HepG2 (cell line): ENCODE measurements at regions of chr1 and their contacts with region 1.

Region 1: DNA sequence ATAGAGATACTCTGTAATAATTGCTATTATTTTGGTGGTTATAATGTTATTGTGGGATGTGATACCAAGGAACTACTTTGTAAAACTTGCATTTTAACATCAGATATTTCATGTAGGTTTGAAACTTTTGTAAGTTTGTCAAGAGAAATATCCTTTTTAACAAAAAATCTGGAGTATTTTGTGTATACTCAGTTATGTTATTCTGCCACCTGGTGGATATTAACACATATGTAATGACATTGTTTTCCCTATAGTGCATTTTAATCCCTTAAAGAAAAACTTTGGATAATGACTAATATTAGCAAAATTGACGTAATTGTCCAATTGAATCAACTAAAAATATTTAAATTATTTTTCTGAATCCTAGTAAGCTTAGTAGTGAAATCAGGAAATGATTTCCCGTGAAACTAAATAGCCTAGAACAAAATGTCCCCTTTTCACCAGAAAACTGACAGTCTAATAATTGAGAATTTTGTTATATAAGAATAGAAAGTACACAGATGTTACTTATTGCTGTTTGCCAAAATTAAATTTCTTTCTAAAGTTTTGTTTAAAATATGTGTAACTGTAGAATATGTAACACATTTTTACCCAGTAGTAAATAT is 39.6 kb downstream of the KCTD3 start:
- DNase-seq: no peak
- ATAC-seq: peak; percentile 48; the same call in 2 of the 3 replicates
- H3K4me3 ChIP-seq: no peak overlapping the region
- H3K27ac ChIP-seq: no peak overlapping the region
- H3K4me1 ChIP-seq: peaks cover 26% of the 10 kb centered on the region
- H3K27me3 ChIP-seq: no peaks in the 10 kb centered on the region
- CTCF ChIP-seq: peak; percentile 36
- EP300 ChIP-seq: no peak
- POLR2A ChIP-seq: no peak
- RAD21 ChIP-seq: no peak

Region 2: DNA sequence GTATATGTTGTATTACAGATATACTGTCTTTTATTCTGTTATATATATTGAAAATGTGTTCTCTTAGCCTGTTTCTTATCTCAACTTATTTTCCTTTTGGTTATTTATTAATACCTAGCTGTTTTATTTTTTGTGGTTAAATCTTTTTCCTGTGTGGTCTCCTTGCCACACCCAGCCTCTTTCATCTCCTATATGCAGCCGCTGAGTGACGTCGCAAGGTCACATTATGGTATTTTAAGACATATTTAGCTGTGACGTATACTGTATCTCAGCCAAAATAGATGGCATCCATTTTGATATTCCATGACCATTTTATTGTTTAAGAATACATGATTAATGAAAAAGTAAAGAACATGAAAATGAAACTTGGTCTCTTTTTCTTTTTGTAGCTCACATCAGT is 974.6 kb before region 1 on chr1:
- CTCF ChIA-PET with region 1: no interaction called
- POLR2A ChIA-PET with region 1: no interaction called
- in situ Hi-C with region 1: no loop called
- intact Hi-C with region 1: loop called (anchors 1 kb)
- DNase-seq: no peak
- ATAC-seq: no peak
- H3K4me3 ChIP-seq: no peak overlapping the region
- H3K27ac ChIP-seq: no peak overlapping the region
- H3K4me1 ChIP-seq: peaks cover 11% of the 10 kb centered on the region; the same call in 1 of the 2 replicates
- H3K27me3 ChIP-seq: no peaks in the 10 kb centered on the region
- CTCF ChIP-seq: no peak
- EP300 ChIP-seq: no peak
- POLR2A ChIP-seq: no peak
- RAD21 ChIP-seq: no peak

Region 3: GRCh38 chr1:215566556-215567490 is 39.8 kb before region 1 on chr1 and contains the start of gene KCTD3:
- CTCF ChIA-PET with region 1: no interaction called
- POLR2A ChIA-PET with region 1: no interaction called
- in situ Hi-C with region 1: no loop called
- intact Hi-C with region 1: loop called (anchors 2 kb)
- DNase-seq: peak; percentile 64
- ATAC-seq: peak; percentile 83
- H3K4me3 ChIP-seq: peak within 1 kb of the TSS; percentile 85 to 92 (median 86)
- H3K27ac ChIP-seq: peak within 1 kb of the TSS; percentile 88
- H3K4me1 ChIP-seq: peaks cover 33% of the 10 kb centered on the region
- H3K27me3 ChIP-seq: no peaks in the 10 kb centered on the region; a peak in 1 of 5 replicates
- CTCF ChIP-seq: 0 out of 2 replicates have a peak, but pooled peaks have one; percentile 8
- EP300 ChIP-seq: peak in 1 of 2 experiments; percentile 41; a peak in 2 of 4 replicates
- POLR2A ChIP-seq: peak; percentile 83 to 88
- RAD21 ChIP-seq: 0 out of 2 replicates have a peak, but pooled peaks have one; percentile 19
- total RNA-seq, gene KCTD3: 68.1 and 101 TPM in 2 replicates